Right cardiac atrium (tissue), 5 donors: ENCODE measurements at regions of chr11 and their contacts with region 1.

Region 1: GRCh38 chr11:108703916-108704315 is 39.0 kb downstream of the DDX10 start:
- DNase-seq: no peak
- ATAC-seq: no peak
- H3K4me3 ChIP-seq: no peak overlapping the region
- H3K27ac ChIP-seq: no peak overlapping the region
- H3K4me1 ChIP-seq: no peaks in the 10 kb centered on the region
- H3K27me3 ChIP-seq: no peaks in the 10 kb centered on the region

Region 2: DNA sequence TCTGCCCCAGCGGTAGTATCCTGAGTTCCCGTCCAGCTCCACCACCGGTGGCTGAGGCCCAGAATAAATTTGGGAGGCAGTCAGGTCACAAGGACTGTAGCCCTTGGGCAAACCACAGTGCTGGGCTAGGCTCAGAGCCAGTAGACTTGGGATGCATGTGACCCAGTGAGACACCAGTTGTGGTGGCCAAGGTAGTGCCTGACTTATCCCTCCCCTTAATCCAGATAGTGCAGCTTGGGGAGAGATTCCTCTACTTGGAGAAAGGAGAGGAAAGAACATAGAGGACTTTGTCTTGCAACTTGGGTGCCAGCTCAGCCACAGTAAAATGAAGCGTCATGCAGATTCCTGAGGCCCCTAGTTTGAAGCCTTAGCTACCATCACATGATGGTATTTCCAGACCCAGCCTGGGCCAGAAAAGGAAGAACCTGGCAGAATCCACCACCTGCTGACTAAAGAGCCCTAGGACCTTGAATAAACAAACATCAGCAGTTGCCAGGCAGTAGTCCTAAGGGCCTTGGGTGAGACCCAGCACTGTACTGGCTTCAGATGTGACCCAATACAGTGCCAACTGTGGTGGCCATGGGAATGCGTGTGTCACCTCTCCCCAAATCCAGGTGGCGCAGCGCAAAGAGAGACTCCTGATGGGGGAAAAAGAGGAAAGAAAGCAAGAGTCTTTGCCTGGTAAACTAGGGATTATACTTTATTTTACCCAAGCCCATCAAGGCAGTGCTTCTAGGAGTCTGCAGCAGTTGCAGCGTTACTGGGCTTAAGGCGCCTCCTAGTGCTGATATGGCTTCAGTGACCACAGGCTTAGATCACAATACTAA is 56.0 kb before region 1 on chr11:
- intact Hi-C with region 1: no loop called
- DNase-seq: peak; percentile 66 to 85 (median 81)
- ATAC-seq: peak; percentile 92 to 94
- H3K4me3 ChIP-seq: no peak overlapping the region
- H3K27ac ChIP-seq: peak overlapping the region; percentile 50
- H3K4me1 ChIP-seq: no peaks in the 10 kb centered on the region
- H3K27me3 ChIP-seq: no peaks in the 10 kb centered on the region

Region 3: GRCh38 chr11:109864834-109865547 is 1161.1 kb after region 1 on chr11:
- intact Hi-C with region 1: loop called in 2 of 4 experiments (anchors 5 to 10 kb)
- DNase-seq: no peak
- ATAC-seq: no peak
- H3K4me3 ChIP-seq: no peak overlapping the region
- H3K27ac ChIP-seq: no peak overlapping the region
- H3K4me1 ChIP-seq: no peaks in the 10 kb centered on the region
- H3K27me3 ChIP-seq: no peaks in the 10 kb centered on the region